Caco-2 (cell line): ENCODE measurements at regions of chr6 and their contacts with region 1.

Region 1: GRCh38 chr6:136191606-136192312 is 58.4 kb downstream of the MTFR2 start:
- DNase-seq: no peak
- H3K4me3 ChIP-seq: no peak overlapping the region
- H3K4me3 Mint-ChIP-seq: no peak overlapping the region
- H3K27ac Mint-ChIP-seq: no peak overlapping the region
- H3K4me1 ChIP-seq: 0 out of 2 replicates have a peak, but pooled peaks cover 6% of the 10 kb centered on the region
- H3K4me1 Mint-ChIP-seq: peaks cover 8% of the 10 kb centered on the region
- H3K27me3 ChIP-seq: no peaks in the 10 kb centered on the region
- H3K27me3 Mint-ChIP-seq: no peaks in the 10 kb centered on the region
- CTCF ChIP-seq: no peak

Region 2: DNA sequence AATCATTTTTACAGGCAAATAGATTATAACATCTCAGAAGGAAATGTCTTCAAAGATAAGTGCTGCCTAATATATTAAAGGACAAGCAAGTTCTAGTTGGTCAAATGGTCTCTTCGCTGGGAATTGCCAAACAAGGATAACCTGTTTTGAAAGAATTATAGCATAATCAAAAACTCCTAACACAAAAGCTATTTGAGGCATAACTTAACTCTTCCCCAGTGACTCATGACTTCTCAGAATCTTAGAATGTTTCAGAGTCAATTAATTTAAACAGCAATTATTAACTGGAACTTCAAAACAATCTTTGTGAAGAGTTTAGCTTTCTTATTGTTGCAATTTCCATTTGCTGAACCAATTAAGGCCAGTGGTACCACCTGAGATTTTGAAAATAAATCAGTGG is 68.3 kb before region 1 on chr6:
- CTCF ChIA-PET with region 1: no interaction called
- POLR2A ChIA-PET with region 1: interaction called, 10 read pairs
- intact Hi-C with region 1: no loop called
- DNase-seq: no peak
- H3K4me3 ChIP-seq: no peak overlapping the region
- H3K4me3 Mint-ChIP-seq: no peak overlapping the region
- H3K27ac Mint-ChIP-seq: no peak overlapping the region
- H3K4me1 ChIP-seq: no peaks in the 10 kb centered on the region
- H3K4me1 Mint-ChIP-seq: no peaks in the 10 kb centered on the region
- H3K27me3 ChIP-seq: no peaks in the 10 kb centered on the region
- H3K27me3 Mint-ChIP-seq: peaks cover 3% of the 10 kb centered on the region
- CTCF ChIP-seq: no peak

Region 3: DNA sequence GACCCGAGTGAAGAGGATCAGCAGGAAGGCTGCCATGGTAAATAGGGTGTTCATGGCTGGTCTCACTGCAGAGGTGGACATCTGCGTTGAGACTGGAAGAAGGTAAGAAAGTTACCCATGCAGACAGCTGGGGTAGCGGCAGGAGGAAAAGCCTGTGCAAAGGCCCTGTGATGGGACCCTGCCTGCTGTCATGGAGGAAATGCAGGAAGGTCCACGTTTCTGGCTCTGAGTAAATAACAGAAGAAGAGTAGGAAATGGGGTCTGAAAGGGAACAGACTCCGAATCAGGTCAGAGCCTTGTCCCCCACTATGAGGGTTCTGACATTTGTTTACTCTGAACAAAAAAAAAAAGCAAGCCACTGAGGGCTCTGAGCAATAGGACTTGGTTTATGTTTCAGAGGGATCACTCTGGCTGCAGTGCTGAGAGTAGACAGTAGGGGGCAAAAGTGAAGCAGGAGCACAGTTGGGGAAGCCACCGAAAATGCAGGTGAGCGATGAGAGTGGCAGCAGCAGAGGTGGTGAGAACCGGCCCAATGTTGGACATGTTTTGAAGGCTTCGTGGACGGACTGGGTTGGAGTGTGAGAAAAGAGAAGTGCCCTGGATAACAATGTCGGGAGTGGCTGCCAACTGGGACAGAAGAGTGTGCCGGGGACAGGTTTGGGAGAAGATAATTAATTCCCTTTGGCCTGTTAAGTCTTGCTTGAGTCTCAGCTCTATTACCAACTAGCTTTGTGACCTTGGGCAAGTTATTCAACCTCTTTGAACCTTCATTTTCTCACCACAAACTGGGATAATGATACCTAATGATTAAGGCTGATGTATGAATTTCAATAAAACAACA is 416.4 kb after region 1 on chr6:
- CTCF ChIA-PET with region 1: no interaction called
- POLR2A ChIA-PET with region 1: no interaction called
- intact Hi-C with region 1: no loop called
- DNase-seq: peak; percentile 58 to 66
- H3K4me3 ChIP-seq: no peak overlapping the region
- H3K4me3 Mint-ChIP-seq: no peak overlapping the region
- H3K27ac Mint-ChIP-seq: peak overlapping the region; percentile 43
- H3K4me1 ChIP-seq: peaks cover 16% of the 10 kb centered on the region
- H3K4me1 Mint-ChIP-seq: peaks cover 24% of the 10 kb centered on the region
- H3K27me3 ChIP-seq: no peaks in the 10 kb centered on the region
- H3K27me3 Mint-ChIP-seq: no peaks in the 10 kb centered on the region
- CTCF ChIP-seq: peak; percentile 41 to 54